ENCODE measurements at regions of chr4 and their contacts with region 1.

Region 1: DNA sequence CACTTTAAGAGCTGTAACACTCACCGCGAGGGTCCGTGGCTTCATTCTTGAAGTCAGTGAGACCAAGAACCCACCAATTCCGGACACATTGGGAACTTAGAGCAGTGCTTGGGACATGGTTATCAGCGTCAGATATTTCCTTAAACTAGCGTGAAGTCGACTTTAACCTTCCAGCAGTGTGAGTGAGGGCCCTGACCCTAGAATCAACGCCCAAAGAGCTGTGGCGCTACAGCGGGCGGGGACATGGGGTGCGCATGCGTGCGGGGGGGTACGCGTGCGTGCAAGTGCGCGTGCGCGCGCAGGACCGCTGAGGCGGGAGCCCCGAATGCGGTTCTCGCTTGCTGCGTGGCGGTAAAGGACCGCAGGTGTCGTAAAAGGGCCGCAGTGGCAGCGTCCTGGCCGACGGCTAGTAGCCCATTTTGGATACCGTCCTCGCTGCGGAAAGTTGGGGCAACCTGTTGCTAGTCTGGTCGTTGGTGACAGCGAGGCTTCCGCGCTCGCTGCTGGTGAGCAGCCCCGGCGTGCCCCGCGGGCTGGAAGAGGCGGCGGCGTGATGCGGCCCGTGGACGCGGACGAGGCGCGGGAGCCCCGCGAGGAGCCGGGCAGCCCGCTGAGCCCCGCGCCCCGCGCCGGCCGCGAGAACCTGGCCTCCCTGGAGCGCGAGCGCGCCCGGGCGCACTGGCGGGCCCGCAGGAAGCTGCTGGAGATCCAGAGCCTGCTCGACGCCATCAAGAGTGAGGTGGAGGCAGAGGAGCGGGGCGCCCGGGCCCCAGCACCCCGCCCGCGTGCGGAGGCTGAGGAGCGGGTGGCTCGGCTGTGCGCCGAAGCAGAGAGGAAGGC is 19.8 kb upstream of the S100P start:
- DNase-seq: peak; percentile 96
- ATAC-seq: peak; percentile 79
- H3K4me3 Mint-ChIP-seq: peak overlapping the region; percentile 91
- H3K27ac Mint-ChIP-seq: peak overlapping the region; percentile 98
- H3K4me1 Mint-ChIP-seq: peaks cover 47% of the 10 kb centered on the region
- H3K27me3 Mint-ChIP-seq: no peaks in the 10 kb centered on the region

Region 2: GRCh38 chr4:6658597-6659075 is 15.2 kb before region 1 on chr4:
- CTCF ChIA-PET with region 1: interaction called, 16 read pairs
- DNase-seq: peak; percentile 54
- ATAC-seq: peak; percentile 88
- H3K4me3 Mint-ChIP-seq: peak overlapping the region; percentile 67
- H3K27ac Mint-ChIP-seq: no peak overlapping the region
- H3K4me1 Mint-ChIP-seq: peaks cover 8% of the 10 kb centered on the region
- H3K27me3 Mint-ChIP-seq: peaks cover 43% of the 10 kb centered on the region

Region 3: GRCh38 chr4:6688879-6689505 is 15.1 kb after region 1 on chr4:
- CTCF ChIA-PET with region 1: interaction called, 104 read pairs
- DNase-seq: peak; percentile 96
- ATAC-seq: peak; percentile 79
- H3K4me3 Mint-ChIP-seq: peak overlapping the region; percentile 82
- H3K27ac Mint-ChIP-seq: peak overlapping the region; percentile 98
- H3K4me1 Mint-ChIP-seq: peaks cover 73% of the 10 kb centered on the region
- H3K27me3 Mint-ChIP-seq: no peaks in the 10 kb centered on the region

Region 4: DNA sequence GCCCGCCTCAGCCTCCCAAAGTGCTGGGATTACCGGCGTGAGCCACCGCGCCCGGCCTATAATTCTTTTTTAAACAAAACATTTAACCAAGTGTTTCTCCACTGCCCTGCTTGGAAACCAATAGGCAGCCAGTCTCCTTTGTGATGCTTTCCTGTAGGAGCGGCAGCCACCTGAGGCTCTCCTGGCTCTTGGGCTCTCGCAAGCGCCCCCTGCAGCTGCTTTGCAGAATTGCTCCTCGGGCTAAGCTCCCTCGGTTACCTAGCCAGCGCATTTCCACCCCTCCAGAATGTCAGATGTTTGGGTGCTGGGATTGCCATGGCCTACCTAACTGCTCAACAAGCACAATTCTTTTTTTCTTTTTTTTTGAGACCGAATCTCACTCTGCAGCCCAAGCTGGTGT is 27.5 kb after region 1 on chr4:
- CTCF ChIA-PET with region 1: interaction called, 87 read pairs
- DNase-seq: peak; percentile 62
- ATAC-seq: no peak
- H3K4me3 Mint-ChIP-seq: no peak overlapping the region
- H3K27ac Mint-ChIP-seq: no peak overlapping the region
- H3K4me1 Mint-ChIP-seq: peaks cover 66% of the 10 kb centered on the region
- H3K27me3 Mint-ChIP-seq: no peaks in the 10 kb centered on the region

Region 5: GRCh38 chr4:6716018-6716911 is 42.4 kb after region 1 on chr4 and contains the start of gene BLOC1S4:
- CTCF ChIA-PET with region 1: interaction called, 58 read pairs
- DNase-seq: peak; percentile 92
- ATAC-seq: peak; percentile 90
- H3K4me3 Mint-ChIP-seq: peak within 1 kb of the TSS; percentile 88
- H3K27ac Mint-ChIP-seq: peak within 1 kb of the TSS; percentile 93
- H3K4me1 Mint-ChIP-seq: peaks cover 32% of the 10 kb centered on the region
- H3K27me3 Mint-ChIP-seq: no peaks in the 10 kb centered on the region
- total RNA-seq, gene BLOC1S4: 21.8 to 22.3 TPM

Region 6: GRCh38 chr4:7067452-7068278 is 393.8 kb after region 1 on chr4 and contains the start of gene GRPEL1:
- CTCF ChIA-PET with region 1: interaction called, 13 read pairs
- DNase-seq: peak; percentile 100
- ATAC-seq: peak; percentile 93
- H3K4me3 Mint-ChIP-seq: peak within 1 kb of the TSS; percentile 87
- H3K27ac Mint-ChIP-seq: peak within 1 kb of the TSS; percentile 93
- H3K4me1 Mint-ChIP-seq: peaks cover 42% of the 10 kb centered on the region
- H3K27me3 Mint-ChIP-seq: peaks cover 14% of the 10 kb centered on the region
- total RNA-seq, gene GRPEL1: 40.0 to 59.9 TPM